T-cell (primary cell): ENCODE measurements at regions of chr20 and their contacts with region 1.

Region 1: DNA sequence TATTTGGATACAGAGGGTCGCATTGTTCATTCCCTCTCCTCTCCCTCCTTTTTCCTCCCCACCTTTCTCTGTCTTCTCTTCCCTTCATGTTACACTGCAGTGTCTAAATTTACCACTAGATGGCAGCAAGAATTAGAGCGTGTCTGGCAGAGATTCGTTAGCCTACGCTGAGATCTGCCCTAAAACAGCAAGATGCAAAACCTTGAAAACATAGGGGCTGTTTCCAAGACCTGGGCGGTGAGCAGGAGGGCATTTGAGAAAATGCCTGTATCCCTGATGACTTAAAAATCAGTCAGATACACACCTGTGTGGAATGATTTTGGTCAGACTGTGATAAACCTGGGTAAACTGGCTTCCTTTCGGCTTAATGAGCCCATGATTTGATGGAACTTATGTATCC is 101.5 kb upstream of the ISM1 start:
- DNase-seq: peak in 25 of 35 experiments; percentile 1 to 76 (median 12)
- ATAC-seq: peak; percentile 67 to 79 (median 76)
- H3K4me3 ChIP-seq: no peak overlapping the region
- H3K4me3 Mint-ChIP-seq: no peak overlapping the region
- H3K27ac ChIP-seq: no peak overlapping the region
- H3K27ac Mint-ChIP-seq: no peak overlapping the region
- H3K4me1 ChIP-seq: no peaks in the 10 kb centered on the region
- H3K4me1 Mint-ChIP-seq: no peaks in the 10 kb centered on the region
- H3K27me3 ChIP-seq: no peaks in the 10 kb centered on the region
- H3K27me3 Mint-ChIP-seq: no peaks in the 10 kb centered on the region

Region 2: DNA sequence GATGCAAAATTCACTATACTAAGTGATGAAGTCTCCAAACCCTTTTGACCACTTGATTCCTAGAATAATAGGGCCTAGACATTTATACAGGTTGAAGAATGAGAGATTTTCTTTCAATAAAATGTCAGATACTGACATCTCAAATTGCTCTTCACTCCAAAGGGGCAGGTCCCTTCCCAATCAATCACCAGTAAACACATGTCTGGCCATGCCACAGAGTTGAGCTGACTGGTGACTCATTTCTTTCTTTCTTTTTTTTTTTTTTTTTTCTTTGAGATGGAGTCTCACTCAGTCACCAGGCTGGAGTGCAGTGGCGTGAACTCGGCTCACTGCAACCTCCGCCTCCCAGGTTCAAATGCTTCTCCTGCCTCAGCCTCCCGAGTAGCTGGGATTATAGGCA is 1590.5 kb before region 1 on chr20:
- CTCF ChIA-PET with region 1: no interaction called
- POLR2A ChIA-PET with region 1: no interaction called
- DNase-seq: no peak
- ATAC-seq: no peak
- H3K4me3 ChIP-seq: no peak overlapping the region
- H3K4me3 Mint-ChIP-seq: no peak overlapping the region
- H3K27ac ChIP-seq: no peak overlapping the region
- H3K27ac Mint-ChIP-seq: no peak overlapping the region
- H3K4me1 ChIP-seq: no peaks in the 10 kb centered on the region
- H3K4me1 Mint-ChIP-seq: no peaks in the 10 kb centered on the region
- H3K27me3 ChIP-seq: no peaks in the 10 kb centered on the region
- H3K27me3 Mint-ChIP-seq: no peaks in the 10 kb centered on the region

Region 3: DNA sequence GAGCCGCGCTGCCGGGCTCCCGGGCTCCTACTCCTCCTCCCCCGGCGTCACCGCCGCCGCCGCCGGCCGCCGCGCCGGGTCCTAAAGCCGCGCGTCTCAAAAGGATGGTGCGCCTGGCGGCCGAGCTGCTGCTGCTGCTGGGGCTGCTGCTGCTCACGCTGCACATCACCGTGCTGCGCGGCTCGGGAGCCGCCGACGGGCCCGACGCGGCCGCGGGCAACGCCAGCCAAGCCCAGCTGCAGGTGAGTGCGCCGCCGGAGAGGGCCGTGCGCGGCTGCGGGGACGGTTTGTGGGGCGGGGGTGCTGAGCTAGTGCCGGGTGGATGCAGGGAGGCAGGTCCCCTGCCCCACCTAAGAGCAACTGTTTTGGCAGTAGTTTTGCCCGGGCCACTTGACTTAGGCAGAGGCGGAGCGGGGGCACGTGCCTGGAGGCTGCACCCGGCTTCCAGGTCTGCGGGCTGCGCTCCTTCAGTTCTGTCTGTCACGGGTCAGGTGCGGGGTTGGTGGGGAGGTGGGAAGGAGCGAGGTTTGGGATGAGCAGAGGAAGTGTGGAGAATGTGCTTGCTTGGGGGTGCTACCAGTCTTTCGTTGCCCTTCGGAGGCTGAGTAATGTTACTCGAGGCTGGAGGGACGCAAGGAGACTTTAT is 102.2 kb after region 1 on chr20:
- CTCF ChIA-PET with region 1: no interaction called
- POLR2A ChIA-PET with region 1: no interaction called
- DNase-seq: peak; percentile 27 to 78 (median 55)
- ATAC-seq: peak; percentile 79 to 86 (median 80)
- H3K4me3 ChIP-seq: peak overlapping the region; percentile 48 to 77
- H3K4me3 Mint-ChIP-seq: peak overlapping the region; percentile 81 to 88 (median 86)
- H3K27ac ChIP-seq: no peak overlapping the region
- H3K27ac Mint-ChIP-seq: peak overlapping the region; percentile 75 to 88
- H3K4me1 ChIP-seq: peaks cover 11 to 24% of the 10 kb centered on the region in 2 experiments
- H3K4me1 Mint-ChIP-seq: peaks cover 18 to 29% (median 20%) of the 10 kb centered on the region in 3 donors
- H3K27me3 ChIP-seq: peaks cover 7 to 32% of the 10 kb centered on the region in 2 experiments
- H3K27me3 Mint-ChIP-seq: peaks cover 18 to 29% of the 10 kb centered on the region in 2 donors

Region 4: GRCh38 chr20:13302647-13303450 is 183.3 kb after region 1 on chr20:
- CTCF ChIA-PET with region 1: interaction called, 3 to 48 read pairs
- POLR2A ChIA-PET with region 1: no interaction called
- DNase-seq: peak in 27 of 35 experiments; percentile 4 to 50 (median 21)
- ATAC-seq: peak; percentile 48 to 70 (median 66)
- H3K4me3 ChIP-seq: no peak overlapping the region
- H3K4me3 Mint-ChIP-seq: no peak overlapping the region
- H3K27ac ChIP-seq: no peak overlapping the region
- H3K27ac Mint-ChIP-seq: no peak overlapping the region
- H3K4me1 ChIP-seq: no peaks in the 10 kb centered on the region
- H3K4me1 Mint-ChIP-seq: no peaks in the 10 kb centered on the region
- H3K27me3 ChIP-seq: no peaks in the 10 kb centered on the region
- H3K27me3 Mint-ChIP-seq: no peaks in the 10 kb centered on the region